Left colon (tissue), 2 donors: ENCODE measurements at regions of chr6 and their contacts with region 1.

Region 1: GRCh38 chr6:150430815-150431214 is 62.0 kb downstream of the IYD start:
- DNase-seq: no peak
- ATAC-seq: no peak

Region 2: DNA sequence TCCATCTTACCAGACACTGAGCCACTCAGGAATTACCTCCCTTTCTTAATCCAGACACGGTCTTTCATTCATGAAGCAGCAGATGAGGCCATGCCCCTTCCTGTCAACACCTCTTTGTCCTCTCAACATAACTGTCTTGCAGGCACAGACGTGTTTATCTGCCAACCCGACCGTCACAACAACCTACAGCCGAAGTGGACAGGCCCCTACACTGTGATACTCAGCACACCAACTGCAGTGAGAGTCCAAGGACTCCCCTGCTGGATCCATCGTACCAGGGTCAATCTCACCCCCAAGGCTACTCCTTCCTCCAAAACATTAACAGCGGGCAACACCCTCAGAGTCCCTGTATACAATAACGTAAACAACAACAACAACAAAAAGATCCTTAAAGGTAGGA is 331.3 kb before region 1 on chr6:
- intact Hi-C with region 1: no loop called
- DNase-seq: no peak
- ATAC-seq: no peak

Region 3: GRCh38 chr6:150352321-150353291 is 78.2 kb before region 1 on chr6:
- intact Hi-C with region 1: no loop called
- DNase-seq: no peak
- ATAC-seq: no peak

Region 4: DNA sequence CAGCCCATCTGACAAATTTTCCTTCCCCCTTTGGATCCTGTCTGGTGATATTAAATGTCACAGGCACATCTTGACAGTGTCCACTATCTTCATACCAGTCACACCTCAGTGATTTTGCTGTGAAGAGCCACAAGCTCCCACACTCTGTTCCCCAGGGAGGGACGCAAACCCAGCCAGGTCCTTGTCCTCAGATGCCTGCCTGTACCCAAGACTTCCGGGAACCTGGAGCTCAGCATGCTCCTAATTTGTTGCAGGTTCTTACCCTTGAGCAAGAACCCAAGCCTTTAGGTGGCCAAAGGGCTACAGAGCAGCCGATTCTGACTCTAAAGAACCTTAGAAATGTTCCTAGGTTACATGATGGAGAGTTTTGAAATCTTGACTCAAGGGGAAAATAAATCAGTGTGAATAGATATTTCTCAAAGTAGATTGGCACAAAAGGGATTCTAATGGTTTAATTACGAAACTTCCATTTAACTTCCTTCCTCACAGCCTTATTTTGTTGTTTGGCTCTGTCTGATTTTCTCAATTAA is 368.5 kb after region 1 on chr6:
- intact Hi-C with region 1: loop called in 1 of 2 experiments (anchors 5 kb)
- DNase-seq: no peak
- ATAC-seq: no peak